ENCODE measurements at regions of chr14 and their contacts with region 1.

Region 1: GRCh38 chr14:93655078-93655750 is 133.1 kb downstream of the PRIMA1 start:
- DNase-seq: peak; percentile 60
- ATAC-seq: peak; percentile 68
- H3K4me3 ChIP-seq: no peak overlapping the region
- H3K27ac ChIP-seq: no peak overlapping the region
- H3K4me1 ChIP-seq: no peaks in the 10 kb centered on the region
- H3K27me3 ChIP-seq: no peaks in the 10 kb centered on the region
- CTCF ChIP-seq: peak; percentile 75
- EP300 ChIP-seq: no peak
- POLR2A ChIP-seq: no peak
- RAD21 ChIP-seq: no peak; the same call in 1 of the 2 replicates

Region 2: GRCh38 chr14:93676419-93676958 is 21.3 kb after region 1 on chr14:
- CTCF ChIA-PET with region 1: no interaction called
- POLR2A ChIA-PET with region 1: no interaction called
- in situ Hi-C with region 1: no loop called
- intact Hi-C with region 1: loop called (anchors 2 kb)
- DNase-seq: no peak
- ATAC-seq: no peak
- H3K4me3 ChIP-seq: no peak overlapping the region
- H3K27ac ChIP-seq: no peak overlapping the region
- H3K4me1 ChIP-seq: peaks cover 9% of the 10 kb centered on the region
- H3K27me3 ChIP-seq: peaks cover 0 to 4% of the 10 kb centered on the region in 2 experiments; a peak in 1 of 5 replicates
- CTCF ChIP-seq: no peak
- EP300 ChIP-seq: no peak
- POLR2A ChIP-seq: no peak
- RAD21 ChIP-seq: no peak

Region 3: DNA sequence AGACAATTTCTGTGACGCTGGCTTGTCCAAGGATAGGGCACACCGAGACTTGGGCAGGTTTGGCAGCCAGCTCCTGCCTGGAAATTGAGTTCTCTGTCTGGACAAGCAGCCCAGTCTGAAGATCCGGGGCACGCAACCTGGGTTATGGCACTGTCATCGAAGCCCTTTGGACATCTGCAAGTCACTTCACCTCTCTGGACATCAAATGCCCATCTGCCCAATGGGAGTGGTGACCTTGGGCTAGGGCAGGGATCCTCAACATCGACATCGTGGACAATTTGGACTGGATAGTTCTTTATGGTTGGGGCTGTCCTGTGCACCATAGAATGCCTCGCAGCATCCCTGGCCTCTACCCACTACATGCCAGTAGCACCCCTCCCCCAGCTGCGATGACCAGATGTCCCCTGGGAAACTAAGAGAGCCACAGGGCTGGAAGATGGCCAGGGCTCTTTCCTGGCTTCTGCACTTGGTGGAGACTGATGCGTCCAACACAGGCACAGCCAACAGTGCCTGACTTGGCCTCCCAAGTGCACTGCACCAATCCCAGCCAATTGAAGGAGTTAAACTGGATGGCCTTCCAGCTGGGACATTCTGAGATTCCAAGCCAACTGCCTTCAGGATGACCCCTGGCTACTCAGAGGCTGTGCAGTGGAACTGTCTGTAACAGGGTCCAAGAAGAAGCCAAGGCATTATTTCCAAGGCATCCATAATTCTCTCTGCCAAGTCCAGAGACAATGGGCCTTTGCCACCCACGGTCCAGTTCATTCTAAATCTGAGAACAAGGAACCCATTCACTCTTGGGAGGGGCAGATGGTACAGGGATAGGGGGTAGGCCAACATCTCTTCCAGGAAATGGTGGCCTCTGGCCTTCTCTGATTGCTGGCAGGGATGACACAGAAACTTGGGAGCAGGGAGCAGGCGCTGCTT is 97.7 kb after region 1 on chr14:
- CTCF ChIA-PET with region 1: no interaction called
- POLR2A ChIA-PET with region 1: no interaction called
- in situ Hi-C with region 1: no loop called
- intact Hi-C with region 1: no loop called
- DNase-seq: no peak
- ATAC-seq: no peak
- H3K4me3 ChIP-seq: no peak overlapping the region
- H3K27ac ChIP-seq: no peak overlapping the region
- H3K4me1 ChIP-seq: peaks cover 14% of the 10 kb centered on the region
- H3K27me3 ChIP-seq: no peaks in the 10 kb centered on the region
- CTCF ChIP-seq: no peak
- EP300 ChIP-seq: no peak
- POLR2A ChIP-seq: no peak
- RAD21 ChIP-seq: no peak

Region 4: GRCh38 chr14:93788543-93789227 is 133.5 kb after region 1 on chr14:
- CTCF ChIA-PET with region 1: no interaction called
- POLR2A ChIA-PET with region 1: no interaction called
- in situ Hi-C with region 1: no loop called
- intact Hi-C with region 1: loop called (anchors 5 kb)
- DNase-seq: no peak
- ATAC-seq: peak; percentile 79
- H3K4me3 ChIP-seq: peak overlapping the region; percentile 52 to 71 (median 56)
- H3K27ac ChIP-seq: no peak overlapping the region
- H3K4me1 ChIP-seq: peaks cover 50% of the 10 kb centered on the region
- H3K27me3 ChIP-seq: peaks cover 0 to 15% of the 10 kb centered on the region in 2 experiments; a peak in 2 of 5 replicates
- CTCF ChIP-seq: peak; percentile 32; the same call in 1 of the 2 replicates
- EP300 ChIP-seq: no peak
- POLR2A ChIP-seq: peak in 1 of 2 experiments; percentile 46; a peak in 1 of 4 replicates
- RAD21 ChIP-seq: no peak

Region 5: DNA sequence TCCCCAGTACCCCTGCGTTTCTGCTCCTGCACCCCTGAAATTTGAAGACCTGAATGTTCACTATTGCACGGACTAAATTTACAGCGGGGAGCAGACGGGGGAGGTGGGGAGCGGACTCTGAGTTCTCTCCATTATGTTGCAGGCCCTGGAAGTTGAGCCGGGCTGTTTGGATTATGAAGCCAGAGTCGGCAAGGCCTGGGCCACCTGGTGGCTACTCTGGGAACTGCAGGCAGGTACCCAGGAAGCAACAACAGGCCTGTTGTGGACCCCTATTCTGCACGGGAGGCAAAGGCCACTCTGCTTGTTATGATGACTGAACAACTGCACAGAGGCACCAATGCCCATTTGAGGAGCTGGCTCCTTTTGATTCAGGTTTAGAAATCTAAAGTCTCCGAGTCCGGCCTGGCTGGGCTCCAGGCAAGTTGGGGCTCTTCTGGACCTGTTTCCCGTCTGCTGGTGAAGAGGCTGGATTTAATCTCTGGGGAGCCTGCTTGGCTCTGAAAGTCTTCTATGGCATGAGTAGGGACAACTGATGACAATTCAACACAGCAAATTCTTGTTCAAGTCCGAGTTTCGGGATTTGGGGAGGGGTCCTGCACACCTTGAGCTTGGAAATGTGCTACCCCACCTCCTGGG is 237.8 kb after region 1 on chr14:
- CTCF ChIA-PET with region 1: interaction called, 18 read pairs
- POLR2A ChIA-PET with region 1: no interaction called
- in situ Hi-C with region 1: no loop called
- intact Hi-C with region 1: loop called (anchors 2 kb)
- DNase-seq: peak; percentile 44
- ATAC-seq: peak; percentile 80
- H3K4me3 ChIP-seq: peak overlapping the region in 1 of 3 experiments; percentile 18; a peak in 1 of 6 replicates
- H3K27ac ChIP-seq: no peak overlapping the region
- H3K4me1 ChIP-seq: peaks cover 55% of the 10 kb centered on the region
- H3K27me3 ChIP-seq: peaks cover 5 to 48% of the 10 kb centered on the region in 2 experiments; a peak in 4 of 5 replicates
- CTCF ChIP-seq: peak; percentile 89
- EP300 ChIP-seq: no peak
- POLR2A ChIP-seq: no peak
- RAD21 ChIP-seq: peak; percentile 76

Region 6: GRCh38 chr14:93906341-93907329 is 251.4 kb after region 1 on chr14:
- CTCF ChIA-PET with region 1: interaction called, 17 read pairs
- POLR2A ChIA-PET with region 1: no interaction called
- in situ Hi-C with region 1: loop called (anchors 5 kb)
- intact Hi-C with region 1: loop called (anchors 1 kb)
- DNase-seq: peak; percentile 59
- ATAC-seq: no peak
- H3K4me3 ChIP-seq: no peak overlapping the region
- H3K27ac ChIP-seq: peak overlapping the region; percentile 81
- H3K4me1 ChIP-seq: peaks cover 99% of the 10 kb centered on the region
- H3K27me3 ChIP-seq: no peaks in the 10 kb centered on the region
- CTCF ChIP-seq: peak; percentile 74
- EP300 ChIP-seq: no peak
- POLR2A ChIP-seq: no peak
- RAD21 ChIP-seq: peak; percentile 54; the same call in 1 of the 2 replicates

Region 7: DNA sequence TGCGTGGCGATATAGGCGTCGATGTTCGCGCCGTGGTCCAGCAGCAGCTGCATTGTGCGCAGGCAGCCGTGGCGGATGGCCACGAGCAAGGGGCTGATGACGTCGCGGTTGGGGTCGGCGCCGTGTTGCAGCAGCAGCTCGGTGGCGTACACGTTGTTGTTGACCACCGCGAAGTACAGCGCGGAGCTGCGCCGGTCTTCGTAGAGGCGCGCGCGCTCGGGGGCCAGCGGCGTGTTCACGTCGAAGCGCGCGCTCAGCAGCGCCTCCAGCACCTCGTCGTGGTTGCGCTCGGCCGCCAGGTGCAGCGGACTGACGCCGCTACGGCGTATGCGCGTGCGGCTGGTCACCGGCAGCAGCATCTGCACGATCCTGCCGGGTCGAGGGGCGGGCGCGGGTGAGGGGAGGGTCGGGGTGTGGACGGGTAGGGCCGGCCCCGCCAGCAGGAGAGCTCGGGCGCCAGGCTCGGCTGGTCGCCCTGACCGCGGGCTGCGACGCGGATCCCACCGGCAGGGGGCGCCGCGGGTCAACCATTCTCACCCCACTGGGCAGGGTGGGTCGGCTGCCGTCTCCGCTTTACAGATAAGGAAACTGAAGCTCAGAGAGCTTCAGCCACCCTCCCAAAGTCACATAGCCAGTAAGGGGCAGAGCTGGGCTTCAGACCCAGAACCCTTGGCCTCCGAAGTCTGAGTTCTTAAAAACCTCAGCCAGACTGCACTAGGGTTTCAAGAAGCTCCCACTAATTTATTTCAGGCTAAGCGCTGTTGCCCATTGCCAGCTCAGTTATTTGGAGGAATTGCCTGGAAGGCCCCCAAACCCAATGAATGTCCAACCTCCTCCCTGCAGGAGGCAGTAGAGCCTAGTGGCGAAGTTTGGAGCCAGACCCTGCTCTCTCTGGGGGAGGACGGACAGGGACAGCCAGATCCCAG is 284.4 kb after region 1 on chr14:
- CTCF ChIA-PET with region 1: interaction called, 5 read pairs
- POLR2A ChIA-PET with region 1: no interaction called
- in situ Hi-C with region 1: no loop called
- intact Hi-C with region 1: loop called (anchors 1 kb)
- DNase-seq: no peak
- ATAC-seq: peak; percentile 91
- H3K4me3 ChIP-seq: no peak overlapping the region
- H3K27ac ChIP-seq: no peak overlapping the region
- H3K4me1 ChIP-seq: peaks cover 25% of the 10 kb centered on the region
- H3K27me3 ChIP-seq: no peaks in the 10 kb centered on the region; a peak in 1 of 5 replicates
- CTCF ChIP-seq: peak; percentile 92
- EP300 ChIP-seq: no peak
- POLR2A ChIP-seq: no peak
- RAD21 ChIP-seq: peak; percentile 97

Measured in HepG2 (cell line).